CD14-positive monocyte (primary cell): ENCODE measurements at regions of chr17 and their contacts with region 1.

Region 1: GRCh38 chr17:63425482-63425881 is 20.6 kb downstream of the CYB561 start:
- DNase-seq: peak; percentile 59 to 79 (median 72)
- H3K4me3 ChIP-seq: no peak overlapping the region
- H3K4me3 Mint-ChIP-seq: no peak overlapping the region
- H3K27ac ChIP-seq: no peak overlapping the region
- H3K27ac Mint-ChIP-seq: no peak overlapping the region
- H3K4me1 ChIP-seq: no peaks in the 10 kb centered on the region
- H3K4me1 Mint-ChIP-seq: peaks cover 7% of the 10 kb centered on the region
- H3K27me3 ChIP-seq: no peaks in the 10 kb centered on the region
- H3K27me3 Mint-ChIP-seq: peaks cover 0 to 3% (median 2%) of the 10 kb centered on the region in 3 donors
- CTCF ChIP-seq: peak; percentile 90

Region 2: GRCh38 chr17:63304704-63305261 is 120.7 kb before region 1 on chr17:
- intact Hi-C with region 1: no loop called
- DNase-seq: no peak
- H3K4me3 ChIP-seq: no peak overlapping the region
- H3K4me3 Mint-ChIP-seq: no peak overlapping the region
- H3K27ac ChIP-seq: no peak overlapping the region
- H3K27ac Mint-ChIP-seq: no peak overlapping the region
- H3K4me1 ChIP-seq: no peaks in the 10 kb centered on the region
- H3K4me1 Mint-ChIP-seq: peaks cover 2% of the 10 kb centered on the region
- H3K27me3 ChIP-seq: no peaks in the 10 kb centered on the region
- H3K27me3 Mint-ChIP-seq: peaks cover 0 to 3% (median 0%) of the 10 kb centered on the region in 3 donors
- CTCF ChIP-seq: no peak

Region 3: DNA sequence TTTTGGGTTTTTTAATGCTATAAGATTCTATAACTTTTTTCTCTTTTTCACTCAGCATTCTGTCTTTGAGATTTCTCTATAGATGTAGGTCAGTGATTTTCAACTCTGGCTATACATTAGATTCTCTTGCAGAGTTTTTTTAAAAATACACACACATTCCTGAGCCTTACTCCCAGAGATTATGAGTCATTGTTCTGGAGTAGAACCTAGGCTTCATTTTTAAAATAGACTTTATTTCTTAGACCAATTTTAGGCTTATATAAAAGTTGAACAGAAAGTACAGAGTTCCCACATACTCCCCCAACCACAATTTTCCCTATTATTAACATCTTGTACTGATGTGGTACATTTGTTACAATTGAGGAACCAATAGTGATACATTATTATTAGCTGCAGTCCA is 42.7 kb before region 1 on chr17:
- intact Hi-C with region 1: no loop called
- DNase-seq: no peak
- H3K4me3 ChIP-seq: no peak overlapping the region
- H3K4me3 Mint-ChIP-seq: no peak overlapping the region
- H3K27ac ChIP-seq: no peak overlapping the region
- H3K27ac Mint-ChIP-seq: no peak overlapping the region
- H3K4me1 ChIP-seq: no peaks in the 10 kb centered on the region
- H3K4me1 Mint-ChIP-seq: no peaks in the 10 kb centered on the region
- H3K27me3 ChIP-seq: no peaks in the 10 kb centered on the region
- H3K27me3 Mint-ChIP-seq: no peaks in the 10 kb centered on the region
- CTCF ChIP-seq: no peak

Region 4: DNA sequence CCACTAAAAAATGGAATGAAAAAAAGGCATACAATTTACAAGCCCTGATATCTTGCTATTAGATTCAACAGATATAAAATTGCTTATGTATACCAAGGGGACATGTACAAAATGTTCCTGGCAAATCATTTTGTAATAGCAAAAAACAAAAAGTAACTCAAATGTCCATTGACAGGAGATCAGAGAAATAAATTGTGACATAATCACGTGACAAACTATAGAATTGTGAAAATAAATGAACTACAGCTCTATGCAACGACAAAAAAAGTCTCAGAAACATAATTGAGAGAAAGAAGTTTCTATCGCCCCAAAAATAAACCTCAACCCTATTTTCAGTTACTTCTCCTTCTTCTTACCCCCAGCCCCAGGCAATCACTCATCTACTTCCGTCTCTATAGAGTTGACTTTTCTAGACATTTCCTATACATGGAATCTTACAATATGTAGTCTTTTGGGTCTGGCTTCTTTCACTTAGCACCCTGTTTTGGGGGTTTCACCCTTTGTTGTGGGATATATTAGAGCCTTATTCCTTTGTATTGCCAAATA is 39.3 kb after region 1 on chr17:
- intact Hi-C with region 1: no loop called
- DNase-seq: peak; percentile 10 to 32 (median 23)
- H3K4me3 ChIP-seq: no peak overlapping the region
- H3K4me3 Mint-ChIP-seq: no peak overlapping the region
- H3K27ac ChIP-seq: no peak overlapping the region
- H3K27ac Mint-ChIP-seq: no peak overlapping the region
- H3K4me1 ChIP-seq: peaks cover 25 to 35% of the 10 kb centered on the region in 2 donors
- H3K4me1 Mint-ChIP-seq: peaks cover 31% of the 10 kb centered on the region
- H3K27me3 ChIP-seq: no peaks in the 10 kb centered on the region
- H3K27me3 Mint-ChIP-seq: peaks cover 2 to 3% (median 3%) of the 10 kb centered on the region in 3 donors
- CTCF ChIP-seq: no peak

Region 5: DNA sequence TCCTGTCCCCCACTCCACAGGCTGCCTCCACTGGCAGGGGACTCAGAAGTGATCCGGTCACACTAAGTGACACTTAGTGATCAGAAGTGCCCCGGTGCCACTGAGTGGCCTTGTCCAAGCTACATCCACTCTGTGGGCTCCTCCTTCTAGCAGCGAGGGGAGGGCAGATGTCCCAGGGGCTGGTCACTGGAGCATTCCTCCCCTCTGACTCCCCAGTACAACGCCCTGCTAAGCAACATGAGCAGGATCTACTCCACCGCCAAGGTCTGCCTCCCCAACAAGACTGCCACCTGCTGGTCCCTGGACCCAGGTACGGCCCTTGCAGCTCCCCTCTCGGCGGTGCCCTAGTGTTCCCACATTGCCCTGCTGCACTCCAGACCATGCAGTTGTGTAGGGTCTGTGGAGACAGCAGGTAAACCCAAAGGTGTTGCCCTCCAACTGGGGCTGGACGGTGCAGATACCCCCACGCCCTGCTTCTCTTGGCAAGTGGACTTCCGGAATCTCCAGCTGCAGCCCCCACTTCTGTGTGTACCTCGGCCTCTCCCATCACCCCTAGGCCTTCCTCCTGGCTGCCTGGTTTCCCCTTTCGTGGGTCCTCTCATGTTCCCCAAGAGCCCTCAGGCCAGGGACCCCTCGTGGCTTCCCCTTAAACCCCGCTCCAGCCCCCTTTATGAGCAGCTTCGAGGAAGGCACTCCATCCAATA is 53.5 kb after region 1 on chr17:
- intact Hi-C with region 1: loop called (anchors 1 kb)
- DNase-seq: peak; percentile 56 to 73 (median 57)
- H3K4me3 ChIP-seq: no peak overlapping the region
- H3K4me3 Mint-ChIP-seq: peak overlapping the region in 1 of 2 donors; percentile 30
- H3K27ac ChIP-seq: no peak overlapping the region
- H3K27ac Mint-ChIP-seq: no peak overlapping the region
- H3K4me1 ChIP-seq: peaks cover 9 to 21% of the 10 kb centered on the region in 2 donors
- H3K4me1 Mint-ChIP-seq: peaks cover 14% of the 10 kb centered on the region
- H3K27me3 ChIP-seq: peaks cover 6 to 46% of the 10 kb centered on the region in 2 donors
- H3K27me3 Mint-ChIP-seq: peaks cover 33 to 55% (median 39%) of the 10 kb centered on the region in 3 donors
- CTCF ChIP-seq: peak; percentile 72

Region 6: GRCh38 chr17:63611354-63611753 is 185.9 kb after region 1 on chr17:
- intact Hi-C with region 1: loop called in 1 of 2 experiments (anchors 5 kb)
- DNase-seq: no peak
- H3K4me3 ChIP-seq: no peak overlapping the region
- H3K4me3 Mint-ChIP-seq: no peak overlapping the region
- H3K27ac ChIP-seq: no peak overlapping the region
- H3K27ac Mint-ChIP-seq: no peak overlapping the region
- H3K4me1 ChIP-seq: no peaks in the 10 kb centered on the region
- H3K4me1 Mint-ChIP-seq: peaks cover 2% of the 10 kb centered on the region
- H3K27me3 ChIP-seq: no peaks in the 10 kb centered on the region
- H3K27me3 Mint-ChIP-seq: peaks cover 0 to 2% (median 1%) of the 10 kb centered on the region in 3 donors
- CTCF ChIP-seq: no peak